Ovary (tissue), 10 donors: ENCODE measurements at regions of chr7 and their contacts with region 1.

Region 1: GRCh38 chr7:80392229-80393169 is 119.4 kb downstream of the GNAT3 start:
- DNase-seq: no peak
- H3K4me3 ChIP-seq: no peak overlapping the region
- H3K27ac ChIP-seq: no peak overlapping the region
- H3K4me1 ChIP-seq: no peaks in the 10 kb centered on the region
- H3K27me3 ChIP-seq: no peaks in the 10 kb centered on the region
- CTCF ChIP-seq: peak; percentile 30 to 38 (median 32)
- EP300 ChIP-seq: no peak
- POLR2A ChIP-seq: no peak

Region 2: GRCh38 chr7:80095545-80095944 is 297.0 kb before region 1 on chr7:
- intact Hi-C with region 1: loop called in 2 of 4 experiments (anchors 10 kb)
- DNase-seq: no peak
- H3K4me3 ChIP-seq: no peak overlapping the region
- H3K27ac ChIP-seq: no peak overlapping the region
- H3K4me1 ChIP-seq: no peaks in the 10 kb centered on the region
- H3K27me3 ChIP-seq: no peaks in the 10 kb centered on the region
- CTCF ChIP-seq: peak; percentile 22 to 50 (median 29)
- EP300 ChIP-seq: no peak
- POLR2A ChIP-seq: no peak

Region 3: GRCh38 chr7:80134536-80135320 is 257.8 kb before region 1 on chr7 and contains the start of gene GNAI1:
- intact Hi-C with region 1: loop called in 2 of 4 experiments (anchors 10 kb)
- DNase-seq: peak; percentile 78 to 90 (median 86)
- H3K4me3 ChIP-seq: peak within 1 kb of the TSS; percentile 91
- H3K27ac ChIP-seq: peak within 1 kb of the TSS; percentile 91 to 95
- H3K4me1 ChIP-seq: peaks cover 1% of the 10 kb centered on the region
- H3K27me3 ChIP-seq: no peaks in the 10 kb centered on the region
- CTCF ChIP-seq: peak in 2 of 3 donors; percentile 30 to 35
- EP300 ChIP-seq: no peak
- POLR2A ChIP-seq: peak; percentile 30
- total RNA-seq, gene GNAI1: 14.9 to 51.0 (median 34.6) TPM

Region 4: GRCh38 chr7:80859272-80859970 is 466.9 kb after region 1 on chr7:
- intact Hi-C with region 1: no loop called
- DNase-seq: peak; percentile 26 to 67 (median 43)
- H3K4me3 ChIP-seq: no peak overlapping the region
- H3K27ac ChIP-seq: no peak overlapping the region
- H3K4me1 ChIP-seq: peaks cover 2% of the 10 kb centered on the region
- H3K27me3 ChIP-seq: no peaks in the 10 kb centered on the region
- CTCF ChIP-seq: no peak
- EP300 ChIP-seq: no peak
- POLR2A ChIP-seq: no peak

Region 5: GRCh38 chr7:81053623-81054022 is 661.1 kb after region 1 on chr7:
- intact Hi-C with region 1: no loop called
- DNase-seq: no peak
- H3K4me3 ChIP-seq: no peak overlapping the region
- H3K27ac ChIP-seq: no peak overlapping the region
- H3K4me1 ChIP-seq: no peaks in the 10 kb centered on the region
- H3K27me3 ChIP-seq: no peaks in the 10 kb centered on the region
- CTCF ChIP-seq: no peak
- EP300 ChIP-seq: no peak
- POLR2A ChIP-seq: no peak